Calu3 (cell line): ENCODE measurements at regions of chr3 and their contacts with region 1.

Region 1: DNA sequence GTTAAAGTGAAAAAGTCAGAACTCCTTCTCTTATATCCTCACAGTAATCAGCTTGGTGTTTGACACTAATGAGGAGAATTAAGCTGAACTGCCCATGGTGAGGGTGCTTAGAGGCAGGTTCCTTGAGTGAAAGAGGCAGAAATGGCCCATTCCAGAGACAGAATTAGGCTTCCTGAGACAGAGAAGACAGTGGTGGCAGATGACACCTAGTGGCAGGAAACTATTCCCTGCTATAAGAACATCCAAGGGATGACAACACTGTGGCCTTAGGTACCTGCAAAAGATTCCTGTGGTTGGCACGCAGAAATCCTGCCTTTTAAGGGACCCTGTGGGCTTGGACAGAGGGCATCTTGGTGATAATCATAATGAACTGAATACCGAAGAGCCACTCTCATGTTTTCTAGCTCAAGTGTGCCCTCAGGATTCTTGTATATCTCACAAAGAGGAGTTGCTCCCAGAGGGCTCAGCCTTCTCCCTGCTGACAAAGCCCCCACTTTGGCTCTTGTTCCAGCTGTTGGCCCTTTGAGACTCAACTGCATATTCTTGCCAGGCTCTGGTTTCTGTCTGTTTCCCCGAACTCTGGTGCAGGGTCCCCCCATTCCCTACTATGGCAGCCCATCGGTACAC is 56.0 kb downstream of the KBTBD12 start:
- DNase-seq: peak; percentile 54
- H3K4me3 Mint-ChIP-seq: no peak overlapping the region
- H3K27ac Mint-ChIP-seq: no peak overlapping the region
- H3K4me1 Mint-ChIP-seq: no peaks in the 10 kb centered on the region
- H3K27me3 Mint-ChIP-seq: peaks cover 92% of the 10 kb centered on the region
- CTCF ChIP-seq: peak; percentile 88

Region 2: DNA sequence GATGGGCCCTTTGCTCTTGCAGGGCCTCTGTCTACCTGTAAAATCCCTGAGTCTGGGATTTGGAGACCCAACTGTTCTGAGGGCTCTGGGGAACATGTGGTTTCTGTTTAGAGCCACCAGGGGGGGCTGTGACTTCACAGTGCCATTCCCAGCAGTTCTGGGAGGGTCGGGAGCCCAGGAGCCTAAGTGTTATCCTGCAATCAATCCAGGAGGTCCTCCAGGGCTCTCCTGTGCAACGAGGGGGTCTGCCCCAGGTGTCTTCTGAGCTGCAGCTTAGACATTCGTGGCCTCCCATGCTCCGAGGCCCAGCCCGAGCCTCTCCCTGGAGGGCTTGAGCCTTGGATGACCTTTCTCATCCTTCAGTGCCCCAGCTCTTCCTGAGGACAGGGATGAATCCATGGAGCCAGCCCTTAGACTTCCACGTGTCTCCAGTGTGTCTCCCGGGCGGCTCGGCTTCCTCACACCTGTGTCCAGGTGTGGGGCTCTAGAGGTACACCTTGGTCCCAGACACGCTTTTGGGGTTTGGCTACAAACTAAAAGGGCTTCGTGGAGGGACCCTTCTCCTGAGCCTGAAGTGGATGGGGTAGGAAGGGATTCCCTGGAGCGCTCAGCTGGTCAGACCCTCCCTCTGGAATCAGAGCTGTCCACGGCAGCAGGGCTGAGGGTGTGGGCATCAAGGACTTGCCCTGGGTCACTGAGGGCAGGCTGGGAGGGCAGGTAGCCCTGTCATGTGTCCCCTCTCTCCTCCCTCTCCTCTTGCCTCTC is 318.7 kb before region 1 on chr3:
- CTCF ChIA-PET with region 1: no interaction called
- intact Hi-C with region 1: loop called (anchors 1 kb)
- DNase-seq: peak; percentile 78
- H3K4me3 Mint-ChIP-seq: no peak overlapping the region
- H3K27ac Mint-ChIP-seq: no peak overlapping the region
- H3K4me1 Mint-ChIP-seq: no peaks in the 10 kb centered on the region
- H3K27me3 Mint-ChIP-seq: no peaks in the 10 kb centered on the region
- CTCF ChIP-seq: peak; percentile 97

Region 3: GRCh38 chr3:127690823-127691452 is 280.1 kb before region 1 on chr3:
- CTCF ChIA-PET with region 1: interaction called, 4 read pairs
- intact Hi-C with region 1: loop called (anchors 2 kb)
- DNase-seq: peak; percentile 81
- H3K4me3 Mint-ChIP-seq: no peak overlapping the region
- H3K27ac Mint-ChIP-seq: no peak overlapping the region
- H3K4me1 Mint-ChIP-seq: no peaks in the 10 kb centered on the region
- H3K27me3 Mint-ChIP-seq: no peaks in the 10 kb centered on the region
- CTCF ChIP-seq: peak; percentile 75

Region 4: GRCh38 chr3:127750226-127751031 is 220.7 kb before region 1 on chr3:
- CTCF ChIA-PET with region 1: no interaction called
- intact Hi-C with region 1: no loop called
- DNase-seq: no peak
- H3K4me3 Mint-ChIP-seq: no peak overlapping the region
- H3K27ac Mint-ChIP-seq: no peak overlapping the region
- H3K4me1 Mint-ChIP-seq: peaks cover 62% of the 10 kb centered on the region
- H3K27me3 Mint-ChIP-seq: no peaks in the 10 kb centered on the region
- CTCF ChIP-seq: no peak

Region 5: GRCh38 chr3:127853681-127854080 is 117.4 kb before region 1 on chr3:
- CTCF ChIA-PET with region 1: no interaction called
- intact Hi-C with region 1: loop called (anchors 5 kb)
- DNase-seq: no peak
- H3K4me3 Mint-ChIP-seq: no peak overlapping the region
- H3K27ac Mint-ChIP-seq: no peak overlapping the region
- H3K4me1 Mint-ChIP-seq: no peaks in the 10 kb centered on the region
- H3K27me3 Mint-ChIP-seq: peaks cover 31% of the 10 kb centered on the region
- CTCF ChIP-seq: no peak

Region 6: DNA sequence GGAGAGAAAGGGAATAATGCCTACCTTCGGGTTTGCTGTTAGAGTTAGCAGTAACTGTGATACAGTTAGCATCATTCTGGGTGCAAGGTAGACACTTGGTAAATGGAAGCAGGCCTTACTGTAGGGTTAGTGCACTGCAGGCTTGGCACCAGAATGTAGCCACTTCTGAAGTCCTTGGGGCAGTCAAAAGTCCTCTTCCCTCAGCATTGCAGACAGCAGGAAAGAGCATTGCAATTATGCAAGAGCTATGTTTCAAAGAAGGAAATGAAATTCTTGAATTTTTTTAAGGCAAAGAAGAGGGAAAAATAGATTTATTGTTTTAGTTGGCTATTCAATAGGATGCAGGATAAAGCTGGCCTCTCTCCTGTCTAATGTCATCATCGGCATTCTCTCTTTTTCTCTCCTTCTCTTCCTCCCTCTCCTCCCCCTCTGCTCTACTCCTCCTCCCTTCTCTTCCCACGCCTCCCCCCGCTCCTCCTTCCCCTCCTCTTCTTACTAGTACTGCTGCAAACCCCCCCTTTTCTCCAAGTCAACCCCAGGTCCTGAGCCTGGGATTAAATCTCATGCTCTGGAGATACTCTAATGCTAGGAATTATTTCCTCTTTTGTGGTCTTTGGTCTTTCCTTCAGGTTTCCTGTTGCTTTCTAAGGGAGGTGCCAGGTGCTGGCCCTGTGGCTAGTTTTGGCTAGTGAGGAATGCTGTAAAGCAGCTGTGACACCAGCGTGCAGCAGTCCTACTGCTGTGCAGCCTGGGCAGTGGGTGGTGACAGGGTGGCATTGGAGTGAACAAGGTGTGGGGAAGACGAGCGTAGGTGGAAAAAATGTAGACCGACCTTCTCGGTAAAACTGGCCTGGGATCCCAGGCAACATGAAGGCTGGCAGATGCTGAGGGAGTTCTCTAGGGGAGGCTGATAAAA is 203.9 kb after region 1 on chr3:
- CTCF ChIA-PET with region 1: no interaction called
- intact Hi-C with region 1: no loop called
- DNase-seq: no peak
- H3K4me3 Mint-ChIP-seq: no peak overlapping the region
- H3K27ac Mint-ChIP-seq: no peak overlapping the region
- H3K4me1 Mint-ChIP-seq: no peaks in the 10 kb centered on the region
- H3K27me3 Mint-ChIP-seq: no peaks in the 10 kb centered on the region
- CTCF ChIP-seq: no peak

Region 7: GRCh38 chr3:128198313-128198712 is 227.2 kb after region 1 on chr3:
- CTCF ChIA-PET with region 1: no interaction called
- intact Hi-C with region 1: no loop called
- DNase-seq: no peak
- H3K4me3 Mint-ChIP-seq: no peak overlapping the region
- H3K27ac Mint-ChIP-seq: no peak overlapping the region
- H3K4me1 Mint-ChIP-seq: peaks cover 5% of the 10 kb centered on the region
- H3K27me3 Mint-ChIP-seq: no peaks in the 10 kb centered on the region
- CTCF ChIP-seq: no peak

Region 8: DNA sequence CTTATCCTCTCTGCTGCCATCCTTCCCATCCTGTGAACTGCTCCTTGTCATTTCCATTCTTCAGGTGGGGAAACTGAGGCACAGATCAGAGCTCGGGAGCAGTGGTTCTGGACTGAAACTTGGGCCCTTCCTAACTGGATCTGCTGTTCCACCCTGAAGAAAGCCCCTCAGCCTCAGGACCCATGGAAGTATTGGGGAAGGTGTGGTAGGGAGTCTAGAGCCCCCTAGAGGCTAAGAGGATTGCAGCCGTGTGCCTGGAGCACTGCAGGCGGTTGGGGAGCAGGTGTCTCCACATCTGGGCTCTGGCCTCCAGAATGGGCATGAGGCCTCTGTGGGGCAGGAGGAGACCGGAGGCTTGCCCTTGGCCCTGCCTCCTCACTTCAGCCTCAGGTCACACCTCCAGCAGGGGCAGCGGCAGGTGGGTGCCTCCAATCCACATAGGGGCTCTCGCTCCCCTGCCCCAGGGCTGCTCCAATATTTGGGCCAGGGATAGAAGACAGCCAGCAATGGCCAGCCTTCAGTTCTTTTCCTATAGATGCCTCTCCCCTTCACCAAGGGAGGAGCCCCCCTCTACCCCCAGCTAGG is 467.5 kb after region 1 on chr3:
- CTCF ChIA-PET with region 1: no interaction called
- intact Hi-C with region 1: no loop called
- DNase-seq: no peak
- H3K4me3 Mint-ChIP-seq: no peak overlapping the region
- H3K27ac Mint-ChIP-seq: no peak overlapping the region
- H3K4me1 Mint-ChIP-seq: peaks cover 12% of the 10 kb centered on the region
- H3K27me3 Mint-ChIP-seq: peaks cover 49% of the 10 kb centered on the region
- CTCF ChIP-seq: peak; percentile 53